PC-3 (cell line): ENCODE measurements at regions of chr21 and their contacts with region 1.

Region 1: GRCh38 chr21:27219068-27219467 is 252.2 kb upstream of the ADAMTS5 start:
- DNase-seq: peak; percentile 44
- ATAC-seq: peak; percentile 81
- H3K4me3 ChIP-seq: no peak overlapping the region
- H3K27ac ChIP-seq: peak overlapping the region; percentile 15; the same call in 1 of the 2 replicates
- H3K4me1 ChIP-seq: no peaks in the 10 kb centered on the region; the same call in 1 of the 2 replicates
- H3K27me3 ChIP-seq: no peaks in the 10 kb centered on the region
- CTCF ChIP-seq: no peak

Region 2: GRCh38 chr21:27306791-27307775 is 88.0 kb after region 1 on chr21:
- CTCF ChIA-PET with region 1: no interaction called
- POLR2A ChIA-PET with region 1: no interaction called
- intact Hi-C with region 1: no loop called
- DNase-seq: no peak
- ATAC-seq: no peak
- H3K4me3 ChIP-seq: no peak overlapping the region
- H3K27ac ChIP-seq: no peak overlapping the region
- H3K4me1 ChIP-seq: no peaks in the 10 kb centered on the region
- H3K27me3 ChIP-seq: no peaks in the 10 kb centered on the region
- CTCF ChIP-seq: no peak

Region 3: DNA sequence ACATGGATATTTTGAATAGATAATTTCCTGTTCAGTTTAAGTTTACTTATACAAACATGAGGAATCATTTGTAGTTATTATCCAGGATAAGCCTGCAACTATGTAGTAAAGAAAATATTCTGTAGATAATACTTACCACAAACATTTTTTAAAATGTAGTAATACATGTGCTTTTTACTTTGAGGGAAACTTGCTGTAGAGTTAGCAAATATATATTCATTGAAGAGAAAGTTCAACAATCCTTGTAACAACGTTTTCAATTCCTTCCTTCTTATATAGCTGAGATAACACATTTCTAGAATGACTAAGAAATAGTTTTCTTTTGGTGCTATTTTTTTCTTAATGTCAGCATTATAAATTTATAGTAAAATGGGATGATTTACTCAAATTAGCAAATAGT is 412.4 kb after region 1 on chr21:
- CTCF ChIA-PET with region 1: no interaction called
- POLR2A ChIA-PET with region 1: no interaction called
- intact Hi-C with region 1: no loop called
- DNase-seq: no peak
- ATAC-seq: no peak
- H3K4me3 ChIP-seq: no peak overlapping the region
- H3K27ac ChIP-seq: no peak overlapping the region
- H3K4me1 ChIP-seq: no peaks in the 10 kb centered on the region
- H3K27me3 ChIP-seq: no peaks in the 10 kb centered on the region
- CTCF ChIP-seq: no peak

Region 4: GRCh38 chr21:28280611-28281010 is 1061.5 kb after region 1 on chr21:
- CTCF ChIA-PET with region 1: no interaction called
- POLR2A ChIA-PET with region 1: interaction called, 10 read pairs
- intact Hi-C with region 1: no loop called
- DNase-seq: no peak
- ATAC-seq: no peak
- H3K4me3 ChIP-seq: no peak overlapping the region
- H3K27ac ChIP-seq: no peak overlapping the region
- H3K4me1 ChIP-seq: peaks cover 10% of the 10 kb centered on the region
- H3K27me3 ChIP-seq: no peaks in the 10 kb centered on the region
- CTCF ChIP-seq: no peak